Naive thymus-derived CD4-positive, alpha-beta T cell (primary cell): ENCODE measurements at regions of chr5 and their contacts with region 1.

Region 1: GRCh38 chr5:138668376-138669079 is 84.7 kb upstream of the CTNNA1 start:
- DNase-seq: peak in 7 of 9 donors; percentile 20 to 56 (median 44)
- ATAC-seq: peak; percentile 84
- H3K4me3 ChIP-seq: no peak overlapping the region
- H3K4me3 Mint-ChIP-seq: peak overlapping the region in 7 of 10 donors; percentile 6 to 63 (median 30)
- H3K27ac ChIP-seq: no peak overlapping the region
- H3K27ac Mint-ChIP-seq: no peak overlapping the region
- H3K4me1 ChIP-seq: peaks cover 18 to 22% of the 10 kb centered on the region in 2 donors
- H3K4me1 Mint-ChIP-seq: peaks cover 17 to 37% (median 31%) of the 10 kb centered on the region in 7 donors
- H3K27me3 ChIP-seq: peaks cover 0 to 26% of the 10 kb centered on the region in 2 donors
- H3K27me3 Mint-ChIP-seq: peaks cover 77 to 88% (median 85%) of the 10 kb centered on the region in 5 donors

Region 2: GRCh38 chr5:138654281-138654867 is 14.2 kb before region 1 on chr5:
- CTCF ChIA-PET with region 1: interaction called, 3 read pairs
- POLR2A ChIA-PET with region 1: interaction called, 3 read pairs
- intact Hi-C with region 1: loop called (anchors 1 kb)
- DNase-seq: peak in 8 of 9 donors; percentile 63 to 84 (median 80)
- ATAC-seq: peak; percentile 88
- H3K4me3 ChIP-seq: no peak overlapping the region
- H3K4me3 Mint-ChIP-seq: peak overlapping the region; percentile 4 to 72 (median 36)
- H3K27ac ChIP-seq: no peak overlapping the region
- H3K27ac Mint-ChIP-seq: peak overlapping the region in 8 of 9 donors; percentile 44 to 93 (median 80)
- H3K4me1 ChIP-seq: peaks cover 15 to 26% of the 10 kb centered on the region in 2 donors
- H3K4me1 Mint-ChIP-seq: peaks cover 17 to 34% (median 27%) of the 10 kb centered on the region in 7 donors
- H3K27me3 ChIP-seq: peaks cover 0 to 36% of the 10 kb centered on the region in 2 donors
- H3K27me3 Mint-ChIP-seq: peaks cover 80 to 92% (median 86%) of the 10 kb centered on the region in 5 donors